Activated T-helper 2 cell treated with anti-CD3 and anti-CD28 coated beads, Interferon-gamma antibody, Interleukin-2, Interleukin-4, amounts not matched to agents 10 μg/mL and 5 μg/mL and 100 μg/mL, durations not matched to agents 14 hours and 24 hours and 36 hours (primary cell): ENCODE measurements at regions of chr15 and their contacts with region 1.

Region 1: DNA sequence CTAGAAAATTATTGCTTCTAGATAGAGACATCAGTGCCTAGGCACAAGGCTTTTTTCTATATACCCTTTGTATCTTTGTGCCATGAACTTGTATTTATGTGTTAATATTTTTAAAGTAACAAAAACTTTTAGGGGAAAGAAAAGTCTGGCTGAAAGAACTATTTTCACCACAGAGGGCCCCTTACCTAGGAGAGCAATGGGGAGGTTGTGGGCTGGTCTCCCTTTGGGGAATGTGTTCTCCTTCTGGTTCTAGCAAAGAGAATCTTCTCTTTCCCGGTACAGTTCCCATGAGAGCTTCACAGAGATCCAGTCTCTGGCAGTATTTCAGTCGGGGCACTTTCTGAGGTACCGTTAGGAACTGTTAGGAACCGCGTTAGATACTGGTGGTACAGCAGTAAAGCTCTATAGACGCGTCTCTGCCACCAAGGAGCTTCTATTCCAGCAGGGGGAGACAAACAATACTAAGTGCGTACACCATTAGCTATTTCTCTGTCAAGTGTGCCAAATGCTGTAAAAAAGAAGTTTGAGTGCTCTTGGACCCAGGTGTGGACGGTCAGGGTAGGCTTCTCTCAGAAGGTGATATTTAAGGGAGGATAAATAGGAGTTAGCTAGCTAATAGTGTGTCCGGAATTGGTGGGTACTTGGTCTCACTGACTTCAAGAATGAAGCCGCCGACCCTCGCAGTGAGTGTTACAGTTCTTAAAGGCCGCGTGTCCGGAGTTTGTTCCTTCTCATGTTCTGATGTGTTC is 4.6 kb upstream of the EPB42 start:
- DNase-seq: peak; percentile 35
- H3K4me3 Mint-ChIP-seq: no peak overlapping the region
- H3K27ac Mint-ChIP-seq: no peak overlapping the region
- H3K4me1 Mint-ChIP-seq: peaks cover 3% of the 10 kb centered on the region
- H3K27me3 Mint-ChIP-seq: peaks cover 15% of the 10 kb centered on the region

Region 2: GRCh38 chr15:43268111-43269105 is 43.0 kb after region 1 on chr15:
- intact Hi-C with region 1: loop called (anchors 5 kb)
- DNase-seq: no peak
- H3K4me3 Mint-ChIP-seq: no peak overlapping the region
- H3K27ac Mint-ChIP-seq: no peak overlapping the region
- H3K4me1 Mint-ChIP-seq: peaks cover 2% of the 10 kb centered on the region
- H3K27me3 Mint-ChIP-seq: peaks cover 15% of the 10 kb centered on the region

Region 3: GRCh38 chr15:43285609-43286037 is 60.2 kb after region 1 on chr15:
- intact Hi-C with region 1: loop called (anchors 1 kb)
- DNase-seq: peak; percentile 34
- H3K4me3 Mint-ChIP-seq: no peak overlapping the region
- H3K27ac Mint-ChIP-seq: no peak overlapping the region
- H3K4me1 Mint-ChIP-seq: peaks cover 2% of the 10 kb centered on the region
- H3K27me3 Mint-ChIP-seq: peaks cover 7% of the 10 kb centered on the region